Activated CD4-positive, alpha-beta memory T cell treated with anti-CD3 and anti-CD28 coated beads, Interleukin-2, amount 10 ng/mL, durations not matched to agents 7 days and 5 days (primary cell): ENCODE measurements at regions of chr1 and their contacts with region 1.

Region 1: GRCh38 chr1:7983086-7983778 is 21.7 kb downstream of the PARK7 start:
- DNase-seq: no peak
- H3K4me3 Mint-ChIP-seq: no peak overlapping the region
- H3K27ac Mint-ChIP-seq: no peak overlapping the region
- H3K4me1 Mint-ChIP-seq: peaks cover 15% of the 10 kb centered on the region
- H3K27me3 Mint-ChIP-seq: no peaks in the 10 kb centered on the region

Region 2: DNA sequence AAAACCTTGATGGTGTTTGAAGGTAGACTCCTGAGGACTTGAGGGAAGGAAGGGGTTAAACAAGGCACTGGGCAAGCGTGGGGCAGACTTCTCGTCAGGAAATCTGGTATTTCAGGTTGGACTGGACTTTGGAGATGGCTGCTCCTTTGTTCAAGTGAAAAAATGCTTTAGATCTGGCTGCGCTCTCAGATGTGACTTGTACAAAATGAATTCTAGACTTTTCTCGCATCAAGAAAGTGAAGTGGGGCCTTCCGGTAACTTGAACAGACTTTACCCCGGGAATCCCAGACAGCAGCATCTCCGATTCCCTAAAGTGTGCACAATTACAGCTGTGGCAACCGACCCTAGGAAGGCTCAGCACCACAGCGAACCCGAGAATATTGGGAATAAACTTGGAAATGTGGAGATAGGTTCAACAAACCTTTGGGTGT is 87.2 kb after region 1 on chr1:
- CTCF ChIA-PET with region 1: no interaction called
- POLR2A ChIA-PET with region 1: no interaction called
- DNase-seq: no peak
- H3K4me3 Mint-ChIP-seq: no peak overlapping the region
- H3K27ac Mint-ChIP-seq: no peak overlapping the region
- H3K4me1 Mint-ChIP-seq: no peaks in the 10 kb centered on the region
- H3K27me3 Mint-ChIP-seq: peaks cover 3% of the 10 kb centered on the region

Region 3: GRCh38 chr1:8348777-8349491 is 365.7 kb after region 1 on chr1:
- CTCF ChIA-PET with region 1: interaction called, 14 read pairs
- POLR2A ChIA-PET with region 1: interaction called, 3 read pairs
- DNase-seq: peak; percentile 70
- H3K4me3 Mint-ChIP-seq: no peak overlapping the region
- H3K27ac Mint-ChIP-seq: no peak overlapping the region
- H3K4me1 Mint-ChIP-seq: no peaks in the 10 kb centered on the region
- H3K27me3 Mint-ChIP-seq: no peaks in the 10 kb centered on the region